ENCODE measurements at regions of chr5 and their contacts with region 1.

Region 1: GRCh38 chr5:10501554-10502075 is 59.9 kb downstream of the ROPN1L start:
- DNase-seq: no peak
- H3K4me3 ChIP-seq: no peak overlapping the region
- H3K27ac ChIP-seq: no peak overlapping the region
- H3K4me1 ChIP-seq: peaks cover 0 to 3% (median 0%) of the 10 kb centered on the region in 4 experiments; a peak in 1 of 7 replicates
- H3K27me3 ChIP-seq: no peaks in the 10 kb centered on the region
- CTCF ChIP-seq: no peak
- EP300 ChIP-seq: no peak
- POLR2A ChIP-seq: no peak
- RAD21 ChIP-seq: no peak

Region 2: DNA sequence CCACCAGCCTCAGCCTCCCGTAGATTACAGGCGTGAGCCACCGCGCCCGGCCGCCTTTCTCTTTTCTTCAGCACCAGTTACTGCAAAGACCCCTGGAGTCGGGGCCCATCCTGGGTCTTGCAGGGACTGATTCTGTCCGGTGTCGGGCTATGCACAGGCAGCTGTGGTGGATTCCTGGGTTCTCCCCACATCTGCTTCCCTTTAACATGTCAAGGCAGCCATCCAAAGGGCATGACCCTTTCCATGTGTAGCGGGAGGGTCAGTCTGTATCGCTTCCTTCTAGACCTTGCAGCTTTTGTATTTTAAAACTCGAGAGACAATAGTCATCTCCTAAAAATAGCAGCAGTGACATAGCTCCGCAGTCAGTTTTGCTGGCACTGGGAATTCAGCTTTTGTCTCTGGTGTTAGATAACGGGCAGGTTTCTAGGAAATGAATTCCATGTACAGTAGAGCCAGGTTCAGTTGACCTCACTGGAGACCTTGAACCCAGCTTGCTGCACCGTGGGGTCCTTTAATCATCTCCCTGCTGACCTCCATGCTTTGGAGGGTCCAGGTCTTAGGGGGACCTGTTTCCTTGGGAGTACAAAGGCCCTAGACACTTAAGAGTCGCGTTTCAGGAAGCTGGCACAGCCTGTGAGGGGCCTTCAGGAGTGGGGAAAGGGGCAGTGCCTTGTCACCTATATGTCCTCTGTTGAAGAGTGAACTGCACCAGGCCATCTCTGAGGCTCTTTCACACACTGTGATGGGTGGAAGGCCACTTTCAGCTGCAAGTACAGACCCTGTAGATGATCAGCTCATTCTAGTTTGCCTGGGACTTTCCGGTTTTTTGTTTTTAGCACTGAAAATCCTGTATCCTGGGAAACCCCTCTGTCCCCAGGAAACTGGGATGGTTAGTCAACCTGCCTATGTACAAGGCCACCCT is 76.0 kb after region 1 on chr5:
- CTCF ChIA-PET with region 1: interaction called, 11 read pairs
- POLR2A ChIA-PET with region 1: no interaction called
- DNase-seq: no peak
- H3K4me3 ChIP-seq: no peak overlapping the region
- H3K27ac ChIP-seq: no peak overlapping the region
- H3K4me1 ChIP-seq: peaks cover 0 to 5% (median 3%) of the 10 kb centered on the region in 4 experiments; a peak in 4 of 7 replicates
- H3K27me3 ChIP-seq: no peaks in the 10 kb centered on the region
- CTCF ChIP-seq: no peak
- EP300 ChIP-seq: no peak
- POLR2A ChIP-seq: no peak
- RAD21 ChIP-seq: no peak

Region 3: DNA sequence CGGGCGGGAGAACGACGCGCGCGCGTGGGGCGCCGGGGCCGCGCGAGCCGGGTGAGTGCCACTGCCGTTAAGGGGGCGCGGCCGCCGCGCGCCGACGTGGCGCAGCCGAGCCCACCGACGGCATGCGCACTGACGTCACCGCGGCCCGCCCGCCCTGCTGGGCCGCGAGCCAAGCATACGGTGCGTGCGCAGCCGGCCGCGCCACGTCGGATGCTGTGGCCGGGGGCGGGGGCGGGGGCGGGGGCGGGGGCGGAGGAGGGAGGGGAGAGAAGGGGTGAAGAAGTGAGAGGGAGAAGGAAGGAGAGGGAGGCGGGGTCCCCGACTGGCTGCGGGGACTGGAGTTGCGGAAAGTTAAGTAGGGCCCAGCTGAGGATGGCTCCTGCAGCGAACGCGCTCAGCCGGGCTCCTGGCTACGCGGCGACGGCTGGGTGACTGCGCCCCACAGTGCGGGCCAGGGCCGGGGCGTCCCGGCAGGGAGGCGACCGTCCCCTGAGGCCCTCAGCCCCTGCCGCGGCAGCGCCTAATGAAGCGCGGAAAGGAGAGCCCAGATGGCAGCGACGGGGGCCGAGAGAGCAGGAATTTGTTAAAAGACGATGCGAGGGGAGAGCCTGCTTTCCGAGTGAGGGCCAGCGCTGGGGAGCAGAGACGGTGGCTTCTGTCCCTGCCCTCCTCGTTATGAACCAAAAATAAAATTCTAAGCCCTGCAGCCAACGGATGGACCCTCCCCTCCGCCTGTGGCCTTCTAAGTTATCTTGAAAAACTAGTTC is 259.7 kb after region 1 on chr5 and contains the start of gene DAP:
- CTCF ChIA-PET with region 1: no interaction called
- POLR2A ChIA-PET with region 1: no interaction called
- DNase-seq: peak; percentile 64 to 87
- H3K4me3 ChIP-seq: peak within 1 kb of the TSS; percentile 63 to 84 (median 82)
- H3K27ac ChIP-seq: peak within 1 kb of the TSS; percentile 45; the same call in 1 of the 2 replicates
- H3K4me1 ChIP-seq: peaks cover 2 to 10% (median 5%) of the 10 kb centered on the region in 4 experiments; a peak in 5 of 7 replicates
- H3K27me3 ChIP-seq: peaks cover 0 to 9% (median 7%) of the 10 kb centered on the region in 4 experiments; a peak in 5 of 7 replicates
- CTCF ChIP-seq: no peak
- EP300 ChIP-seq: no peak
- POLR2A ChIP-seq: no peak
- RAD21 ChIP-seq: no peak
- total RNA-seq, gene DAP: 43.3 and 44.4 TPM in 2 replicates

Measured in H1 (cell line).